ENCODE measurements at regions of chr20 and their contacts with region 1.

Region 1: GRCh38 chr20:38221119-38221589 is 39.4 kb downstream of the KIAA1755 start:
- DNase-seq: peak; percentile 66 to 90
- H3K4me3 ChIP-seq: no peak overlapping the region
- H3K27ac ChIP-seq: no peak overlapping the region
- H3K4me1 ChIP-seq: peaks cover 22% of the 10 kb centered on the region
- H3K27me3 ChIP-seq: no peaks in the 10 kb centered on the region
- CTCF ChIP-seq: peak; percentile 97

Region 2: DNA sequence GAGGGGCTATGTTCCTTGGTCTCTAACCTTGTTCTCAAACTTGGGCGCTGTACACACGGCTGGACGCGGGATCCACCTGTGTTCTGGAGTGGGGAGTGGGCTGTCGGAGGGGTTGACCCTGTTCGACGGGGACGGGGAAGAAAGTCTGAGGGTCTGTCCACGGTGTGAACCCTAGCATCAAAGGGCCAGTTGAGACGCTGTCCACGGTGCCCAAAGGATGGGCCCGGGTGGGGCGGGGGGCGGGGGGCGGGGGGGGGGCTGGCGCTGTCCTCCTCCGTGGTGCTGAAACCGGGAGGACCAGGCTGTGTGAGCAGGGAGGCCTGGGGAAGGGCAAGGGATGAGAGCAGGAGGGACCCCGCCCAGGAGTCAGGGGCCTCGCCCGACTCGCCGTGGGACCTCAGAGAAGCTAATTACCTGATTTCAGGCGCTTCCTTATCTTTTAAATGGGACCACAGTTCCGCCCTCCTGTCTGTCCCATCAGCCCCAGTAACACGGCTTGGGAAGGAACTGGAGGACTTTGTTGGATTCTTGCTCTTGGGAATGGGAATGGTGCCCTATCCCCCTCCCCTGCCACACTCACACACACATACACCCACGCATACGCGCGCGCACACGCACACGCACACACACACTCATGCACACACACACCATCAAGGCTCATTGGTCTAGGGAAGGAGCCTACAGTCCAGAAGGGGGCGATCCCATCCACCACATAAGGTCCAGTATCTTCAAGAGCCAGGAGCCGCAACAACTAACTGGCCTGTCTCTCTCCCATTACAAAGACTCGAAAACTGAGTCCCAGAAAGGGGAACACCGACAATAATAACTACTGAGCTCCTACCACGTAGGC is 319.3 kb before region 1 on chr20:
- CTCF ChIA-PET with region 1: no interaction called
- POLR2A ChIA-PET with region 1: no interaction called
- intact Hi-C with region 1: loop called (anchors 5 kb)
- DNase-seq: peak in 1 of 2 experiments; percentile 33
- H3K4me3 ChIP-seq: no peak overlapping the region
- H3K27ac ChIP-seq: no peak overlapping the region
- H3K4me1 ChIP-seq: no peaks in the 10 kb centered on the region
- H3K27me3 ChIP-seq: peaks cover 29% of the 10 kb centered on the region
- CTCF ChIP-seq: peak; percentile 54

Region 3: DNA sequence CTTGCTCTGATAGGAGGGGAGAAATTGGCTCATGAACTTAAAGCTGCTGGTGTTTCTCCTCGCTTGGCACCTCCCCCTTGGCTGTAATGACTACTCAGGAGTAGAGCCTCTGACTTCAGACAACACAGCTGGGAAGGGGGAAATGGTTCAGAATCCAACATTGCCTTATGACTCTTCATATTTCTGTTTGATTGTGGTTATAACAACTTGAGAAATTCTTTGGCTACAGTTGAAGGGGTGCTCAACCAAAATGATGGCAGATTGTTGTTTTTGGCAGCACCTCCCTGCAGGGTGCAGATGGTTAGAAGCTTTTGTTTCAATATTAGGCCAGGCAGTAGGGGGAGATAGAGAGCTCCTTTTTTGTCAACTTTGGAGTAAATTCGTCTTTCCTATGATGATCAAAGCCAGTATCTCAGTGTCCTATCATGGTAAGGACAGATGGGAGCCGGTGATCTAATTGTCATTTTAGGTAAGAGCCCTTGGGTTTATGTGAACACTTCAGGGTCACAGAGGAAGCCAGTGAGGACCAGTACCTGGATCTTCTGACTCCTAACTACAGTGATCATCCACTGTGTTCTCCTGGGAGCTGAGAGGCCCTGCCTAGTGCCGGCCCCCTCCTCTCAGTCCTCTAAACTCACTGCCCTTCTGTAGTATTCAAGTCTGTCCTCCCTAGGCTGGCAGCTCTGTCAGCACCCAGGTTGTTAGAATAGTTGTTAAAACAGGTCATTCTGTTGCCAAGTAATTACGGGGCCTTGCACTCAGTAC is 147.7 kb before region 1 on chr20:
- CTCF ChIA-PET with region 1: interaction called, 24 read pairs
- POLR2A ChIA-PET with region 1: interaction called, 3 read pairs
- intact Hi-C with region 1: loop called (anchors 1 kb)
- DNase-seq: peak; percentile 63 to 80
- H3K4me3 ChIP-seq: no peak overlapping the region
- H3K27ac ChIP-seq: peak overlapping the region; percentile 53
- H3K4me1 ChIP-seq: peaks cover 26% of the 10 kb centered on the region
- H3K27me3 ChIP-seq: no peaks in the 10 kb centered on the region
- CTCF ChIP-seq: peak; percentile 85

Region 4: DNA sequence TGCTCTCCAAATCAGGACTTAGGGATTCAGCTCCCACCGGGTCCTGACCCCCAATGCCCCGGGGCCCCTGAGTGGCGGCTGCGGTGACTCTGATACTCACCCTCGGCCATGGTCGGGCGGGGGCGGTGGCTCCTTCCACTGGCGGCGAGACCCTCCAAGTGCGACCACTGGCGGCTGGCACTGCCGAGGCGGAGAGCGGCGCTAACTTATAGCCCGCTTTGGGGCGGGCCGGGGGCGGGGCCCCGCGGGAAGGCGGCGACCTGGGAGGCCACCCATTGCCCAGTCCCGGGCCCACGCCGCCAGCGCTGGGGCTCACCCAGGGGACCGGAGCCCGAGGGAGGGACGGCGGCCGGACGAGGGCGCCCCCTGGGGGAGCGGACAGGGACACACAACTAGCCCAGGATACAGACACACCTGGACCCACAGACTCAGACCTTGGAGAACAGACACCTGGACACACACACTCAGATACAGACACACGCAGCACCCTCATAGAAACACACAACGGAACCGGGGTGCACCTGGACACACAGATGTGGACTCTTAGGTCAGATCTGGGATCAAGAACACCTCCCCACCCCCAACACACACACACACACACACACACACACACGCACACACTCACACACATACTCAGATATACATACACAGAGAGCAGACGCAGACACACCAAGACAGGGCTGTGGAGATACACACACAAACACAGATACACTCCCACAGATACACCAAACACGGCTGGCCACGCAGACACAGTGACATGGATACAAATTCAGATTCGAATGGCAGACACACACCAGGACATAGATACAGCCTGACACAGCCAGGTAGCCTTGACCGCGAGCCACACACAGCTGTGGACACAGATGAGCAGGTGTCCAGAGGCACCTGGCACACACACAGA is 55.8 kb before region 1 on chr20 and contains the start of gene TGM2:
- CTCF ChIA-PET with region 1: interaction called, 14 read pairs
- POLR2A ChIA-PET with region 1: interaction called, 3 read pairs
- intact Hi-C with region 1: loop called (anchors 1 kb)
- DNase-seq: peak; percentile 75 to 95
- H3K4me3 ChIP-seq: peak within 1 kb of the TSS; percentile 98
- H3K27ac ChIP-seq: peak within 1 kb of the TSS; percentile 52
- H3K4me1 ChIP-seq: peaks cover 72% of the 10 kb centered on the region
- H3K27me3 ChIP-seq: no peaks in the 10 kb centered on the region
- CTCF ChIP-seq: peak; percentile 88
- total RNA-seq, gene TGM2: 286 and 333 TPM in 2 replicates

Region 5: GRCh38 chr20:38194971-38195504 is 26.1 kb before region 1 on chr20:
- CTCF ChIA-PET with region 1: interaction called, 4 read pairs
- POLR2A ChIA-PET with region 1: interaction called, 16 read pairs
- intact Hi-C with region 1: no loop called
- DNase-seq: peak in 1 of 2 experiments; percentile 72
- H3K4me3 ChIP-seq: no peak overlapping the region
- H3K27ac ChIP-seq: peak overlapping the region; percentile 73
- H3K4me1 ChIP-seq: peaks cover 58% of the 10 kb centered on the region
- H3K27me3 ChIP-seq: no peaks in the 10 kb centered on the region
- CTCF ChIP-seq: no peak